AG04450 (cell line): ENCODE measurements at regions of chr13 and their contacts with region 1.

Region 1: GRCh38 chr13:74184283-74184682 is 50.1 kb upstream of the KLF12 start:
- DNase-seq: no peak
- H3K4me3 ChIP-seq: no peak overlapping the region
- H3K27ac ChIP-seq: no peak overlapping the region
- H3K27me3 ChIP-seq: no peaks in the 10 kb centered on the region
- CTCF ChIP-seq: no peak

Region 2: GRCh38 chr13:74158028-74158427 is 26.3 kb before region 1 on chr13:
- CTCF ChIA-PET with region 1: no interaction called
- POLR2A ChIA-PET with region 1: no interaction called
- DNase-seq: peak; percentile 11
- H3K4me3 ChIP-seq: no peak overlapping the region
- H3K27ac ChIP-seq: no peak overlapping the region
- H3K27me3 ChIP-seq: no peaks in the 10 kb centered on the region
- CTCF ChIP-seq: no peak

Region 3: GRCh38 chr13:74298918-74299317 is 114.6 kb after region 1 on chr13:
- CTCF ChIA-PET with region 1: no interaction called
- POLR2A ChIA-PET with region 1: no interaction called
- DNase-seq: no peak
- H3K4me3 ChIP-seq: no peak overlapping the region
- H3K27ac ChIP-seq: no peak overlapping the region
- H3K27me3 ChIP-seq: no peaks in the 10 kb centered on the region
- CTCF ChIP-seq: no peak

Region 4: GRCh38 chr13:75294110-75294509 is 1109.8 kb after region 1 on chr13:
- CTCF ChIA-PET with region 1: no interaction called
- POLR2A ChIA-PET with region 1: interaction called, 11 read pairs
- DNase-seq: no peak
- H3K4me3 ChIP-seq: no peak overlapping the region
- H3K27ac ChIP-seq: no peak overlapping the region
- H3K27me3 ChIP-seq: no peaks in the 10 kb centered on the region
- CTCF ChIP-seq: no peak